ENCODE measurements at regions of chr1 and their contacts with region 1.

Region 1: DNA sequence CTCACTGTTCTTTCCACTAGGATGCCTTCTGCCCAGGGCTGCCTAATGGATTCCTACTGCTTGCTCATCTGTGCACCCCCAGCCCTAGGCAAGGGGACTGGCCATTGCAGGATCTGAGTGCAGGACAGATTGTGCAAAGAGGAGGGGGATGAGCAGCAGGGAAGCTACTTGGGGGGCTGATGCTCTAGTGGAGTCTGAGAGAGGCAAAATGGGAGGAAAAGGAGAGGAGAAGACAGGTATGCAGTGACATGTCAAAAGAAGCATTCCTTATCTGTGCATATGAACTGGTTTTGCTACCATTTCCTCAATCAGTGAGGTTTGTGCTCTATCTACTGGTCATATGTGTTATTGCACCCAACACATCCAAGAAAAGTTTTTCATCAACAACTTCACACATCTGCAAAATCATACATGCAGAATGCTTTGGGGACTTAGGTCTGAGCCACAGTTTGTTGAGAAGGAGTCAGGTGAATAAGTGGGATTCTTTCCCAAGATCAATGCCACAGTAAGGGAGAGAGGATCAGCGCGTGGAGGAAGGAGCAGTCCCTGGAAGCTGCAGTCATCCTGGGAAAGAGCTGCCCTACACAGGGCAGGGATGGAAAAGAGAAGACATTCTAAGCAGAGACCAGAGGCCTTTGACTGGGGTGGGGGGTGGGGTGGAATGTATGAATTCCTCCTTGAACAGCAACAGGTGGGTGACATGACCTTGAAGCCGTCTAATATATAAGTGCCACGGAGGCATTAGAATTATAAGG is 14.4 kb downstream of the SLC5A9 start:
- DNase-seq: peak in 1 of 2 experiments; percentile 41
- H3K4me3 ChIP-seq: no peak overlapping the region
- H3K4me3 Mint-ChIP-seq: no peak overlapping the region
- H3K27ac Mint-ChIP-seq: no peak overlapping the region
- H3K4me1 ChIP-seq: no peaks in the 10 kb centered on the region
- H3K4me1 Mint-ChIP-seq: peaks cover 8% of the 10 kb centered on the region
- H3K27me3 ChIP-seq: no peaks in the 10 kb centered on the region
- H3K27me3 Mint-ChIP-seq: no peaks in the 10 kb centered on the region
- CTCF ChIP-seq: peak; percentile 44 to 72

Region 2: GRCh38 chr1:48093696-48094528 is 143.0 kb before region 1 on chr1:
- CTCF ChIA-PET with region 1: no interaction called
- POLR2A ChIA-PET with region 1: no interaction called
- intact Hi-C with region 1: loop called (anchors 1 kb)
- DNase-seq: peak; percentile 85 to 90
- H3K4me3 ChIP-seq: peak overlapping the region; percentile 27
- H3K4me3 Mint-ChIP-seq: peak overlapping the region; percentile 77
- H3K27ac Mint-ChIP-seq: no peak overlapping the region
- H3K4me1 ChIP-seq: no peaks in the 10 kb centered on the region
- H3K4me1 Mint-ChIP-seq: no peaks in the 10 kb centered on the region
- H3K27me3 ChIP-seq: no peaks in the 10 kb centered on the region
- H3K27me3 Mint-ChIP-seq: peaks cover 3% of the 10 kb centered on the region
- CTCF ChIP-seq: peak; percentile 82 to 90

Region 3: DNA sequence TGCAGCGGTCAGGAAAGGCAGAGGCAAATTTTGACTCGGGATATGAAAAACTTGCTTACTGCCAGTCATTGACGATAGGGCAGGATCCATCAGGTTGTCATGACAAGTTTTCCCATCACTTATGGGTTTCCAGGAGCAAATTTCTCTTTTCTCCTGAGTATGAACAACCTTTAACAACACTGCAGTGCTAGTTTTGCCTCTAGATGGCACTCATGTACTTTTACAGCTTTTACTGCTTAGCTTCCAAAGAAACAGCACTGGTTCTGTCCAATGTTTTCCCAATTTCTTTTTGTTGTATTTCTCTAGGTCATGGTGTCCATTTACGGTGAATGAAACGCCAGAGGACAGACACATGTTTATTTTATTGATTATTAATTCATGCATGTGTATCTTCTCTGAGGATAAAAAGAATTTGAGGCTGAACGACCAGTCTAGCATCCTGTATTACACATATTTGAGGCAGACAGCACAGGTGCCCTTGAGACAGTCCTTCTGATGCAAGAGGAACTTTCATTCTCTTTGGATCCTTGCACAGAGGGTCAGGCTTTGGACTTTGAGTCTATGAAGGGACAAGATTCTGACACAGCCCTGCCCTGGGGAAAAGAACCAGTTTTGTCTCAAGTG is 127.4 kb before region 1 on chr1:
- CTCF ChIA-PET with region 1: interaction called, 6 read pairs
- POLR2A ChIA-PET with region 1: no interaction called
- intact Hi-C with region 1: loop called (anchors 1 kb)
- DNase-seq: peak in 1 of 2 experiments; percentile 48
- H3K4me3 ChIP-seq: no peak overlapping the region
- H3K4me3 Mint-ChIP-seq: no peak overlapping the region
- H3K27ac Mint-ChIP-seq: no peak overlapping the region
- H3K4me1 ChIP-seq: no peaks in the 10 kb centered on the region
- H3K4me1 Mint-ChIP-seq: no peaks in the 10 kb centered on the region
- H3K27me3 ChIP-seq: no peaks in the 10 kb centered on the region
- H3K27me3 Mint-ChIP-seq: peaks cover 2% of the 10 kb centered on the region
- CTCF ChIP-seq: peak; percentile 72 to 76

Region 4: DNA sequence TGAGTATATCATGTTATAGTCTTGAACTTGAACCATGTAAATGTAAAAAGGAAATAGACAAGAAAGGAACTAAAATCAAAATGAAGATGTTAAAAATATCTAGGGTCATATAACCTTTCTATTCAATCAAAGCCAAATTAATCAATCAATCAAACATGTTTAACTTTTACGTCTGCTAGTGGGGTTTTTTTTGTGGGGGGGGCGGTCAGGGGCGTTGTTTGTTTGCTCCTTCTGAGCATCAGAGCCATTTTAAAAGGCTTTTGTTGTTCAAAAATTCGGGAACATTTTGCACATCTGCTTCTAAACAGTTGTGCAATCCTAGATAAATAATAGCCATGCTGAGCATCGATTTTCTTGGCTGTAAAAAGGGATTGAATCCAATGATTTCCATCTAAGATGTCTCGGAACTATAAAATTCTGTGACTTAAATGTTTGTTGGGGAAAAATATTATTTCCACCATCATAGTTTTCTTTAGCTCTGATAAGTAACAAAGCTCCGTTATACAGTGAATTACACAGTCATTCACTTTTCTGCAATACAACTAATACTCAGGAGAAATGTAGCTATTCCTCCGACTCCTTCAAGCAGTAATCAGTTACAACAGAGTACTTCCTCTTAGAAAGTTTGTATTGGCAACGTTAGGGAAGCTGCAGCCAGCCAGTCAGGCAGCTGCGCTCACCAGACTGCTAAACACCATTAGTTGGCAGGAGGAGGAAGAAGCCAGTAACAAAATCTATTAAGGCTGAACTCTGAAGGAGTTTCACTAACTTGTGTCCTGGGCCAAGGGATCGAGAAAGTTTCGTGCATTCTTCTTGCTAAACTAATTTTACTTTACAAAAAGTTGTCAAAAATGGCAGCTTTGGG is 233.0 kb after region 1 on chr1:
- CTCF ChIA-PET with region 1: no interaction called
- POLR2A ChIA-PET with region 1: no interaction called
- intact Hi-C with region 1: no loop called
- DNase-seq: no peak
- H3K4me3 ChIP-seq: no peak overlapping the region
- H3K4me3 Mint-ChIP-seq: no peak overlapping the region
- H3K27ac Mint-ChIP-seq: no peak overlapping the region
- H3K4me1 ChIP-seq: no peaks in the 10 kb centered on the region
- H3K4me1 Mint-ChIP-seq: peaks cover 6% of the 10 kb centered on the region
- H3K27me3 ChIP-seq: no peaks in the 10 kb centered on the region
- H3K27me3 Mint-ChIP-seq: no peaks in the 10 kb centered on the region
- CTCF ChIP-seq: no peak

Measured in Caco-2 (cell line).